ENCODE measurements at regions of chr4 and their contacts with region 1.

Region 1: GRCh38 chr4:112145326-112145819 is at the start of gene FAM241A:
- DNase-seq: peak; percentile 89
- H3K4me3 Mint-ChIP-seq: peak within 1 kb of the TSS; percentile 91
- H3K27ac Mint-ChIP-seq: peak within 1 kb of the TSS; percentile 93
- H3K4me1 Mint-ChIP-seq: peaks cover 30% of the 10 kb centered on the region
- H3K27me3 Mint-ChIP-seq: no peaks in the 10 kb centered on the region
- total RNA-seq, gene FAM241A: 2.2 to 2.5 TPM

Region 2: DNA sequence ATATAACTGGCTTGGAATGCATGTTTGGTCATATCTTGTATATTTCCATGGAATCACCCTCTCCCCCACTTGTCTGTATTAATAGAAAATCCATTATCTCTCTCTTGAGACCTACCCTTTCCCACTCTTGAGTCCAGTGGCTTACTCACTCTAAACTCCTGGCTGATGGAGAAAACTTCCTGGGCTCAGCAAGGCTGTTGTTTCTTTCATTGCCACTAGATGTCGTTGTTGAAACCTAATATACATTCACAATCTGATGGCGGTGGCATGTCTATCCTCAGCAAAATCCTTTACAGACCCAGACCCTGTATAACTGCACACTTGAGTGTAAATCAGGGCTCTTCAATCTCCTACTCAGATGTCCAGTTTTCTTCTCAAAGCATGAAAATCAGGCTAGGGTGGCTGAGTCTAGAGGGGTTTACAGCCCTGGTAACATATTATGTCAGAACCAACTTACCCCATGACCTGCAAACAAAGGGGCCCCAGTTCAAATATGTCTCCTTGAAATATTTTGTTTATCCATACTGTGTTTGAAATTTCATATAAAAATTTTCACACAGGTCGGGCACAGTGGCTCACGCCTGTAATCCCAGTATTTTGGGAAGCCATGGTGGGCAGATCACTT is 70.1 kb before region 1 on chr4:
- CTCF ChIA-PET with region 1: no interaction called
- intact Hi-C with region 1: no loop called
- DNase-seq: peak; percentile 48
- H3K4me3 Mint-ChIP-seq: no peak overlapping the region
- H3K27ac Mint-ChIP-seq: no peak overlapping the region
- H3K4me1 Mint-ChIP-seq: no peaks in the 10 kb centered on the region
- H3K27me3 Mint-ChIP-seq: peaks cover 3% of the 10 kb centered on the region

Region 3: DNA sequence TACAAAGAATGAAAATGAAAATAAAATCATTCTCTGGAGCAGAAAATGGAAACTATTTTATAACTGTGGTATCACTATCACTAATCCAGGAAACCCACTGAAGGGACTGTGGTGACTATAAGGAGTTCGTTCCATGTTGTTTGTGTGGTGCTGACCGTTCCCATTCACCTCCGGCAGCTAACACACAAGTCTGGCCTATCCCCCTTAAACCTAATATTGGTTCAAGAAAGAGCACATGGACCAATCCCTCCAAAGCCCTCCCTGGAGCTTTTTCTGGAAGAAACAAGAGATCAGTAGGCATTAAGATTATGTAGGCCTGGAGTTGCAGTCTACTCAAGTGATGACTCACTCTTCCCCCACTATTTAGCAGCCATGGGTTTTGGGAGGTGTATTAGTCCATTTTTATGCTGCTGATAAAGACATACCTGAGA is 26.0 kb before region 1 on chr4:
- CTCF ChIA-PET with region 1: interaction called, 3 read pairs
- intact Hi-C with region 1: loop called (anchors 1 kb)
- DNase-seq: peak; percentile 29
- H3K4me3 Mint-ChIP-seq: no peak overlapping the region
- H3K27ac Mint-ChIP-seq: peak overlapping the region; percentile 89
- H3K4me1 Mint-ChIP-seq: peaks cover 22% of the 10 kb centered on the region
- H3K27me3 Mint-ChIP-seq: no peaks in the 10 kb centered on the region

Region 4: DNA sequence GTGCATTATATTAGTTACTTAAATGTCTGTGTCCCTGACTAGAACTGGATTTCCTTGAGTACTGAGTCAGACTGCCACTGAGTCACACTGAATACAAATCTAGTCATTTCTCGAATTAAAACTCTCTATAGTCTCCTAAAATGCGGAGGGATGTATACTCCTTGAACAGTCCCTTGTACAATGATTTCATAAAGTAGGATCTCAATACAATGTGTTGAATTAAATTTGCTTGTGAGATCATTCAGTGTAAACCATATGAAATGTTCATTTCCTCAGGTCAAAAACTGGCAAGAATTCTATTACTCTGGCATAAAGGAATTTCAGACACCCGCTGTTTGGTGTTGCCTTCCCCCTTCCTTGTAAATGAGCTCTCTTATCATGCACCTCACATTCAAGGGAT is 17.6 kb before region 1 on chr4:
- CTCF ChIA-PET with region 1: interaction called, 5 read pairs
- intact Hi-C with region 1: loop called (anchors 1 kb)
- DNase-seq: peak; percentile 17
- H3K4me3 Mint-ChIP-seq: no peak overlapping the region
- H3K27ac Mint-ChIP-seq: no peak overlapping the region
- H3K4me1 Mint-ChIP-seq: peaks cover 9% of the 10 kb centered on the region
- H3K27me3 Mint-ChIP-seq: peaks cover 2% of the 10 kb centered on the region

Region 5: DNA sequence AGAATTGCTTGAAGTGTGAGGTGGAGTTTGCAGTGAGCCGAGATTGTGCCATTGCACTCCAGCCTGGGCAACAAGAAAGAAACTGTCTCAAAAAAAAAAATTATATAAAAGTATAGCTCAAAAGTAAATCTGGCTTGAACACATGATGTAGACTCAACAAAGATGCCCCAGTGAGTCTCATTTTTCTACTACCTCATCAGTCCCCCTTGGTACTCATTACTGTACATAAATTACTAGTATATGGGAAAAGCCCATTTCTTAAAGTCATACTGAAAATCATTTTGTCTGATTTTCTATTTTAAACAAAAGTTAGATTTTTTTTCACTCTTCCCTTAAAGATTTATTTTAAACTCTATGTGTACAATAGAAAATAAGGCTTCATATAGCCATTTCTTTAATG is 39.1 kb after region 1 on chr4:
- CTCF ChIA-PET with region 1: interaction called, 4 read pairs
- intact Hi-C with region 1: loop called (anchors 1 kb)
- DNase-seq: no peak
- H3K4me3 Mint-ChIP-seq: no peak overlapping the region
- H3K27ac Mint-ChIP-seq: no peak overlapping the region
- H3K4me1 Mint-ChIP-seq: peaks cover 39% of the 10 kb centered on the region
- H3K27me3 Mint-ChIP-seq: no peaks in the 10 kb centered on the region

Region 6: DNA sequence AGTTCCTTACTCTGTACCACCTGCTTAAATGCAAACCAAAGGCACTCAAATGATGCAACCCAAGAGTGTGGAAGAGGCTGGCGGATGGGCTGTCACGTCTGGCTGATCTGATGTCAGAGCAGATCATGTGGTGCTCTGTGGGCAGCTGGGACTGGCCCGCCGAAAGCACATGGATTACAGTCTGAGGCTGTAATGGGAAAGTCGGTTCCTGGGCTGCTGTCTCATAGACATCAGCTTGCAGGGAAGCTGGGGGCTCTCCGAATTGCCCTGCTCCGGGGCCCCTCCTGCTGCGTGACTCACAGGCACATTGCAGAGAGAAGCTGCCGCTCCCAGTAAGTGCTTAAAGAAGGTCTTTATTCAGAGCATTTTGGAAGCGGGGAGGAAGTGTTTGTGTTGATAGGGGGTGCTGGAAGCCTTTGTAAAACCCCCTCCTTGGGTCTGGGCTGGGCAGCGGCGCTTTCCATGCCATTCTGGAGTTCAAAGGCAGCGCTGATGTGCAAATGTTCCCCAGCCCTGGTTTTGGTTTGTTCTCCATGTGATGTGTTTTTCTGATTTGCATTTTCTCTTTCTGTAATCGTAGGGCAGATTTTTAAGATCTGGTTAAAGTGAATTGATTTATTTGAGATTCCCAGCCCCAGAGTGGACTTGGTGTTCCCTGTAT is 672.7 kb after region 1 on chr4:
- CTCF ChIA-PET with region 1: no interaction called
- intact Hi-C with region 1: loop called (anchors 5 kb)
- DNase-seq: peak; percentile 88
- H3K4me3 Mint-ChIP-seq: peak overlapping the region; percentile 79
- H3K27ac Mint-ChIP-seq: peak overlapping the region; percentile 62
- H3K4me1 Mint-ChIP-seq: peaks cover 15% of the 10 kb centered on the region
- H3K27me3 Mint-ChIP-seq: peaks cover 36% of the 10 kb centered on the region

Region 7: GRCh38 chr4:113452868-113453620 is 1307.7 kb after region 1 on chr4:
- CTCF ChIA-PET with region 1: no interaction called
- intact Hi-C with region 1: no loop called
- DNase-seq: no peak
- H3K4me3 Mint-ChIP-seq: no peak overlapping the region
- H3K27ac Mint-ChIP-seq: no peak overlapping the region
- H3K4me1 Mint-ChIP-seq: peaks cover 12% of the 10 kb centered on the region
- H3K27me3 Mint-ChIP-seq: no peaks in the 10 kb centered on the region